GM12878 (cell line): ENCODE measurements at regions of chr2 and their contacts with region 1.

Region 1: GRCh38 chr2:155043677-155044076 is 345.2 kb downstream of the KCNJ3 start:
- DNase-seq: no peak
- ATAC-seq: no peak
- H3K4me3 ChIP-seq: no peak overlapping the region
- H3K27ac ChIP-seq: no peak overlapping the region
- H3K4me1 ChIP-seq: no peaks in the 10 kb centered on the region
- H3K27me3 ChIP-seq: no peaks in the 10 kb centered on the region
- CTCF ChIP-seq: no peak
- EP300 ChIP-seq: no peak
- POLR2A ChIP-seq: no peak
- RAD21 ChIP-seq: no peak

Region 2: DNA sequence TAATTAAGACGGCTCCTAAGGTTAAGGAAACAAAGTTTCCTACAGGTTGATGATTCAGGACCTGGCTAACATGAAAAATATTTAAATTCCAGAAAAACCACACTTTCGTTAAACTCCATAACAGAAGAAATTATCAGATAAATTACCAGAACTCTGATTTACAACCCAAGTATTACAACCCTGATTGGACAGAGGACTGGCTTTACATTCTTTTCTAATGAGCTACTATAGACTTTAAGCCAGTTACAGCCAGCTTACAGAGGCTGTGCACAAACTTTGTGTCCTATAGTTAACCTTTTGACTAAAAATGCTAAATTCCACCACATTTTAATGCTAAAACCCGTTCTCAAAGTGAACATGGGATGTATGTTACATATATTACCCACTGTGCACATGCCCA is 113.4 kb after region 1 on chr2:
- CTCF ChIA-PET with region 1: no interaction called
- POLR2A ChIA-PET with region 1: no interaction called
- RAD21 ChIA-PET with region 1: no interaction called
- SMC1A ChIA-PET with region 1: no interaction called
- in situ Hi-C with region 1: no loop called
- intact Hi-C with region 1: no loop called
- DNase-seq: no peak
- ATAC-seq: no peak
- H3K4me3 ChIP-seq: no peak overlapping the region
- H3K27ac ChIP-seq: no peak overlapping the region
- H3K4me1 ChIP-seq: no peaks in the 10 kb centered on the region
- H3K27me3 ChIP-seq: no peaks in the 10 kb centered on the region
- CTCF ChIP-seq: no peak
- EP300 ChIP-seq: no peak
- POLR2A ChIP-seq: no peak
- RAD21 ChIP-seq: no peak

Region 3: GRCh38 chr2:155223781-155224406 is 180.2 kb after region 1 on chr2:
- CTCF ChIA-PET with region 1: no interaction called
- POLR2A ChIA-PET with region 1: no interaction called
- RAD21 ChIA-PET with region 1: no interaction called
- SMC1A ChIA-PET with region 1: no interaction called
- in situ Hi-C with region 1: no loop called
- intact Hi-C with region 1: loop called (anchors 5 kb)
- DNase-seq: no peak
- ATAC-seq: peak; percentile 80
- H3K4me3 ChIP-seq: no peak overlapping the region
- H3K27ac ChIP-seq: no peak overlapping the region
- H3K4me1 ChIP-seq: peaks cover 1% of the 10 kb centered on the region; the same call in 1 of the 2 replicates
- H3K27me3 ChIP-seq: no peaks in the 10 kb centered on the region
- CTCF ChIP-seq: peak; percentile 33 to 61 (median 52); a peak in 5 of 6 replicates
- EP300 ChIP-seq: no peak
- POLR2A ChIP-seq: no peak
- RAD21 ChIP-seq: peak; percentile 87